GM23248 (cell line): ENCODE measurements at regions of chr6 and their contacts with region 1.

Region 1: DNA sequence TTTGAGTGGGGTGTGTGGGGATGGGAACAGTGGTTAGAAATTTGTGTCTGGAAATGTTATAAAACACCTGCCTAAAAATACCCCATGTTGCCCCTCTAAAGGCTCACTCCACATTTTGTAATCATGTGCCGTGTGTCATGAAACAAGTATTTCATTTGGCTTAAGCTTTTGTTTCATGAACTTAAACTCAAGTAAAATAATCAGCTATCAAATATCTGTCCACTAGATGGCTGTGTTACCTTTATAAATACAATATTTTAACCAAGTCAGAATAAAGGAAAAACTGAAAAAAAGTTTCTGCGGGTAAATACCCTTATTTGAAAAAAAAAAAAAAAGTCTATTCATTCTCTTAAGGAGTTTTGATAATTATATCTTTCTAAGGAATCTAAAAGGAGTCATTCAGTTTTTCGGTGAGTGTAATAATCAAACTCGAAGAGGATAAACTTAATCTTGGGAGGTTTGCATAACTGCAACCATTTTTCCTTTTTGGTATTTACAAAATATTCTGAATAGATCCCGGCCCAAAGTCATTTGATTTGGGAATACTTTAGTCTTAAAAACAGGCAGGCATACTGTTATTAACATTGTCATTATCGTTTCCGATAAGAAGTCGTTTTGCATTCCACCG is 29.9 kb upstream of the MTRF1L start:
- DNase-seq: peak; percentile 75
- H3K4me3 ChIP-seq: no peak overlapping the region
- H3K27ac ChIP-seq: no peak overlapping the region
- H3K4me1 ChIP-seq: peaks cover 10% of the 10 kb centered on the region
- H3K27me3 ChIP-seq: no peaks in the 10 kb centered on the region

Region 2: DNA sequence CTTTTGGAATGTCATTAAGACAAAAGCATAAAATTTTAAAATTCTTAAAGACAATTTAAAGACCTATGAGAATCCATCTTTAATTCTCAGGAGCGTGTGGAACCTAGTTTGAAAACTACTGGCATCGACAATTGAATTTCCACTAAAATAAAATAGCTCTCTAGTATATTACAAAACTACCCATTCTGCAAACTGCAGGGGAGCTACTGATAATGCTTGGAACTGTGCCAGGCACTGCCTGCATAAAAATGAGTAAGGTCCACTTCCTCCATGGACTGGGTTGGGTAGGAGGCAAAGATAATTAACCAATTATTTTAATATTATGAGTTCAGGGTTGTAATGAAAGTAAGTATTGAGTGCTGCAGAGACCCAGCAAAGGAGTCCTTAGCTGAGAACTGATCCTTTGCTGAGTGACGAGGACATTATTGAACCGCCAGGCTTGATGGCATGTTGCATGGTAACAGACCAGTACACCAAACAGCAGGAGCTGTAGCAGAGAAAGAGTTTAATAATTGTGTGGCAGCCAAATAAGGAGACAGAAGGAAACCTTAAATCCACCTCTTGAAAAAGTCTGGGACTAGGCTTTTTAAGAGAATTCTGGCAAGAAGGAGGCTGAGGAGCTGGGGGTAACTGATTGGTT is 963.6 kb before region 1 on chr6:
- in situ Hi-C with region 1: no loop called
- DNase-seq: no peak
- H3K4me3 ChIP-seq: no peak overlapping the region
- H3K27ac ChIP-seq: no peak overlapping the region
- H3K4me1 ChIP-seq: no peaks in the 10 kb centered on the region
- H3K27me3 ChIP-seq: no peaks in the 10 kb centered on the region

Region 3: DNA sequence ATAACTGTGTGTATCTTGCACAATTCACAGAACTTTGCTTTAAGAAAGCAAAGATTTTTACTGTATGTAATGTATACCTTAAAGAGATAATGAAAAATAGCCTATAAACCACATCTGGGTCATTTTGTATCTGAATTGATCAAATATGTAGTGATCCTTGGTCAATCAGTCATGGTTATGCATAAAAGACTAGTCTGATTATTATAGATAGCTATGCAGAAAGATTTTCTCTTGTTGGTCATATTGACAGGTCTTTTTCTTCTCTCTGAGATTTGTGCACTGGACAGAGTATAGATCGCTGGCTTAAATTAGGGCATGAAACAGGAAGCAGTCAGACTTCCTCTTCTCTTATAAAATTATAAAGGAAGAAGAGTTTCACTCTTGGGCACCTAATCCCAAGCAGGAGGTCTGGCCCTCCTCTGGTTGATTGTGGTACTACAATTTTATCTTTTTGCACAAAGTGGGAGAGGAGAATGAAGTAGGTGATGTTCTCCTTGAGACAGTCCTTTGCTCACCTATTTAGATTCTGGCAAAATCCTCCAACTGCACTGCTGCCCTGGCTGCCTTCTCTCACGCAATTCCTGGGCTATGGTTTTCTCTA is 479.6 kb after region 1 on chr6:
- in situ Hi-C with region 1: loop called (anchors 10 kb)
- DNase-seq: peak; percentile 46
- H3K4me3 ChIP-seq: no peak overlapping the region
- H3K27ac ChIP-seq: no peak overlapping the region
- H3K4me1 ChIP-seq: no peaks in the 10 kb centered on the region
- H3K27me3 ChIP-seq: no peaks in the 10 kb centered on the region

Region 4: GRCh38 chr6:153947808-153948447 is 915.6 kb after region 1 on chr6:
- in situ Hi-C with region 1: loop called (anchors 25 kb)
- DNase-seq: peak; percentile 45
- H3K4me3 ChIP-seq: no peak overlapping the region
- H3K27ac ChIP-seq: no peak overlapping the region
- H3K4me1 ChIP-seq: peaks cover 14% of the 10 kb centered on the region
- H3K27me3 ChIP-seq: no peaks in the 10 kb centered on the region